BJ (cell line): ENCODE measurements at regions of chr11 and their contacts with region 1.

Region 1: DNA sequence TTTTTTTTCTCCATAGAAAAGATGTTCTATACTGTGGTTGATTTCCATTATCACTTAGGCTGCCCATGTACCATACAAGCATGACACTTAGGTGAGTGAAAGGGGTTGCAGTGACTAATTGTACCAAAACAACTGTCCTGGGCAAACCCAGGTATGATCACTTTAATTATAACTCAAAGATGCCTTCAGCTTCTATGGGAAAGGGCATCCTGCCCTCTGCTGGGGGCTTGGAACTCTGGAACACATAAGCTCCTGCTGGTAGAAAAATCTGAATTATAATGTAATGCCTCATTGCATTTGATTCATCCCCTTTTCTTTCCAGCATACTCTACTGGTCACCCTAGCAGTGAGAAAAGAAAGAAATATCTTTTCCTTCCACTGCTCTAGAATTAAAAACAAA is 206.3 kb downstream of the DDX10 start:
- DNase-seq: no peak
- H3K4me3 ChIP-seq: no peak overlapping the region
- H3K27me3 ChIP-seq: no peaks in the 10 kb centered on the region
- CTCF ChIP-seq: peak; percentile 60

Region 2: DNA sequence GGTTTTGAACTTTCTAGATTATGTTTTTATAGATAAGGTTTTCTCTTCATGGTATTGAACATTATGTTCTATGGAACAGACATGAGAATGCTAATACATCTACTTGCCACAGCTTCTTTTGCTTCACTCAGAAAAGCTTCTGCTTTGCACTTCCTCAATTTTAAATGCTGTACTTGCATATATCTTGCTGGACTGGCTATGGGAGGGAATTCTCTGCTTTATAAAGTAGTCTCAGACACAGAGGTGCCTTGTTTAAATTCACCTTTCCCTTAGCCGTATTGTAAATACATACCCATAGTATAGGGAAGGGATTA is 32.4 kb before region 1 on chr11:
- CTCF ChIA-PET with region 1: no interaction called
- POLR2A ChIA-PET with region 1: no interaction called
- DNase-seq: no peak
- H3K4me3 ChIP-seq: no peak overlapping the region
- H3K27me3 ChIP-seq: no peaks in the 10 kb centered on the region
- CTCF ChIP-seq: no peak

Region 3: GRCh38 chr11:108895579-108896480 is 24.7 kb after region 1 on chr11:
- CTCF ChIA-PET with region 1: no interaction called
- POLR2A ChIA-PET with region 1: no interaction called
- DNase-seq: no peak
- H3K4me3 ChIP-seq: no peak overlapping the region
- H3K27me3 ChIP-seq: no peaks in the 10 kb centered on the region
- CTCF ChIP-seq: no peak

Region 4: DNA sequence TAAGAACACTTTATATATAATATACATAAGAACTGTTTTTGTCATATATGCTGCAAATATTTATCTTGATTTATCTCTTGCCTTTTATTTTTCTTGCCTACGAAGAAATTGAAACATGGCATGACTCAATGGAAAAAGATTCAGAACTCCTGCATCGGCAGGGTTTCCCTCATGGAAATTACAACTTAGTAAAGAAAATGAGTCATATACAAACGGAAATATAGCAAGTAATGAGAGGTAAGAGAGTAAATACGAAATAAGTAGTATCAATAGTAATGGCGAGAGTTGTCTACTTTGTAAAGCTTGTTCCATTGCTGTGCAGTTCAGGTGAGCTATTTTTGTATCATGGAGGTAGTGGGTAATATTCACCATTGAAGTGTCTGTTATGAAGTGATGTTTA is 144.1 kb after region 1 on chr11:
- CTCF ChIA-PET with region 1: no interaction called
- POLR2A ChIA-PET with region 1: no interaction called
- DNase-seq: no peak
- H3K4me3 ChIP-seq: no peak overlapping the region
- H3K27me3 ChIP-seq: no peaks in the 10 kb centered on the region
- CTCF ChIP-seq: no peak

Region 5: GRCh38 chr11:109508943-109509342 is 637.8 kb after region 1 on chr11:
- CTCF ChIA-PET with region 1: no interaction called
- POLR2A ChIA-PET with region 1: interaction called, 11 read pairs
- DNase-seq: no peak
- H3K4me3 ChIP-seq: no peak overlapping the region
- H3K27me3 ChIP-seq: no peaks in the 10 kb centered on the region
- CTCF ChIP-seq: no peak